Transverse colon (tissue), 4 donors: ENCODE measurements at regions of chr12 and their contacts with region 1.

Region 1: DNA sequence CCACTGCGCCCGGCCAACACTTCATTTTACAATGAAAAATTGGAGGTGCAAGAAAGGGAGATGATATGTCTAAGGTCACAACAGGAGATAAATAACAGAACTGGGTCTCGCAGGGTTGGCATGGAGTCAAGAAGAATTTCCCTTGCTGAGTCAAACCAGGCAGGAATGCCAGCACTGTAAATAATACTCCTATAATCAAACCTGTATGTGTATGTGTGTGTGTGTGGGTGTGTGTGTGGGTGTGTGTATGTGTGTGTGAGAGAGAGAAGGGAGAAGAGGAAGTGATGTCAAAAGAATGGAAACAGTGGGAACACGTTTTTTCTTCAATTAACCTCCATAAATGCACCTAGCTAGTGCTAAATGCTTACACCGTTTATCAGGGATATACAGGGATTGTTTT is 70.4 kb downstream of the TMEM116 start:
- DNase-seq: peak; percentile 30
- H3K4me3 ChIP-seq: no peak overlapping the region
- H3K27ac ChIP-seq: no peak overlapping the region
- H3K4me1 ChIP-seq: no peaks in the 10 kb centered on the region
- H3K27me3 ChIP-seq: no peaks in the 10 kb centered on the region
- CTCF ChIP-seq: no peak
- EP300 ChIP-seq: no peak
- POLR2A ChIP-seq: no peak

Region 2: GRCh38 chr12:111842556-111843396 is 99.8 kb before region 1 on chr12:
- in situ Hi-C with region 1: no loop called
- intact Hi-C with region 1: no loop called
- DNase-seq: peak; percentile 75
- H3K4me3 ChIP-seq: peak overlapping the region; percentile 83 to 97 (median 91)
- H3K27ac ChIP-seq: peak overlapping the region; percentile 95 to 97 (median 96)
- H3K4me1 ChIP-seq: peaks cover 27 to 42% (median 35%) of the 10 kb centered on the region in 4 donors
- H3K27me3 ChIP-seq: no peaks in the 10 kb centered on the region
- CTCF ChIP-seq: no peak
- EP300 ChIP-seq: no peak
- POLR2A ChIP-seq: peak; percentile 71

Region 3: GRCh38 chr12:112012775-112013600 is 70.4 kb after region 1 on chr12 and contains the starts of genes ERP29 and TMEM116:
- in situ Hi-C with region 1: loop called in 2 of 4 experiments (anchors 10 kb)
- intact Hi-C with region 1: no loop called
- DNase-seq: peak; percentile 100
- H3K4me3 ChIP-seq: peak within 1 kb of the TSS; percentile 70 to 90 (median 84)
- H3K27ac ChIP-seq: peak within 1 kb of the TSS; percentile 98 to 99 (median 98)
- H3K4me1 ChIP-seq: peaks cover 16 to 44% (median 25%) of the 10 kb centered on the region in 4 donors
- H3K27me3 ChIP-seq: no peaks in the 10 kb centered on the region
- CTCF ChIP-seq: peak; percentile 62 to 94 (median 64)
- EP300 ChIP-seq: peak; percentile 33
- POLR2A ChIP-seq: peak; percentile 95
- total RNA-seq, gene ERP29: 16.5 to 69.8 (median 37.5) TPM
- total RNA-seq, gene TMEM116: 17.6 to 35.9 (median 25.2) TPM